Activated B cell treated with CpG ODN at 0.5 μM for 24 hours (primary cell): ENCODE measurements at regions of chr2 and their contacts with region 1.

Region 1: DNA sequence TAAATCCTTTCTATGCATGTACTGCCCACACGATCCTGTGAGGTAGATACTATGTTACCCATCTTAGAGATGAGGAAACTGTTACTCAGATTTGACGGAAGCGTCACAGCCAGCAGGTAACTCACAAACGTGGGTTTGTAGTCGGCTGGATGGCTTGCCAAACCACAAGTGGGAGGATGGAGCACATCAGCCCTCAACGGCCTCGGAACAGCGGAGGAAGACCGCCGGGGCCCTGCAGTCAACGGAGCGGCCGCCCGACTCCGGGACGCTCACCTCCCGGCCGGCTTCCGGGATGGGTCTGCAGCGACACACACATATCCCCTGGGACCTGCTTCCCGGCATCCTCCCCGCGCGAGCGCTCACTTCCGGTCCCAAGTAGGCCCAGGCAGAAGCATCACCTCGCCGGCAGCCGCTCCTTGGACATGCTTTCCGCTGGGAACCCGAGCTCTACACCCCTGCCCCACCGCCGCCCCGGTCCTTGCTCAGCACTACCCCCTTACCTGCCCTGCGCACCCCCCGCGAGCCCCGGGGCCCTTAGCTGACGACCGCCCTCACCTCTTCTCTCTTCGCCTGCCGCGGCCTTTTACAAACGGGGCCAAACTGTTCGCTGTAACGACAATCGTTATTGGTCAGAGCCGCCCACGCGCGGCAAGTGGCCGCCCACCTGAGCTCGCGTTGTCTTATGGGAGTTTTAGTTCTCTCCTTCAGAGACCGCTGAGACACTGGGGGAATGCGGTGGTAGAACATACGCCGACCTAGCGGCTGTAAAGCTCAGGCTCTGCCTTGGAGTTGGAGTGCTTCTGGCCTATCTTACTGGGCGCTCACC is at the start of gene C2orf42:
- DNase-seq: peak; percentile 93
- ATAC-seq: peak; percentile 86
- H3K4me3 Mint-ChIP-seq: peak within 1 kb of the TSS; percentile 98
- H3K27ac Mint-ChIP-seq: peak within 1 kb of the TSS; percentile 100
- H3K4me1 Mint-ChIP-seq: peaks cover 17% of the 10 kb centered on the region
- H3K27me3 Mint-ChIP-seq: no peaks in the 10 kb centered on the region
- CTCF ChIP-seq: no peak
- total RNA-seq, gene C2orf42: 28.4 and 34.8 TPM in 2 replicates

Region 2: GRCh38 chr2:69829256-69830046 is 361.2 kb before region 1 on chr2 and contains the start of gene GMCL1:
- CTCF ChIA-PET with region 1: no interaction called
- POLR2A ChIA-PET with region 1: interaction called, 6 read pairs
- intact Hi-C with region 1: loop called (anchors 1 kb)
- DNase-seq: peak; percentile 99
- ATAC-seq: peak; percentile 95
- H3K4me3 Mint-ChIP-seq: peak within 1 kb of the TSS; percentile 94
- H3K27ac Mint-ChIP-seq: peak within 1 kb of the TSS; percentile 96
- H3K4me1 Mint-ChIP-seq: peaks cover 29% of the 10 kb centered on the region
- H3K27me3 Mint-ChIP-seq: no peaks in the 10 kb centered on the region
- CTCF ChIP-seq: no peak
- total RNA-seq, gene GMCL1: 8.0 and 13.0 TPM in 2 replicates

Region 3: DNA sequence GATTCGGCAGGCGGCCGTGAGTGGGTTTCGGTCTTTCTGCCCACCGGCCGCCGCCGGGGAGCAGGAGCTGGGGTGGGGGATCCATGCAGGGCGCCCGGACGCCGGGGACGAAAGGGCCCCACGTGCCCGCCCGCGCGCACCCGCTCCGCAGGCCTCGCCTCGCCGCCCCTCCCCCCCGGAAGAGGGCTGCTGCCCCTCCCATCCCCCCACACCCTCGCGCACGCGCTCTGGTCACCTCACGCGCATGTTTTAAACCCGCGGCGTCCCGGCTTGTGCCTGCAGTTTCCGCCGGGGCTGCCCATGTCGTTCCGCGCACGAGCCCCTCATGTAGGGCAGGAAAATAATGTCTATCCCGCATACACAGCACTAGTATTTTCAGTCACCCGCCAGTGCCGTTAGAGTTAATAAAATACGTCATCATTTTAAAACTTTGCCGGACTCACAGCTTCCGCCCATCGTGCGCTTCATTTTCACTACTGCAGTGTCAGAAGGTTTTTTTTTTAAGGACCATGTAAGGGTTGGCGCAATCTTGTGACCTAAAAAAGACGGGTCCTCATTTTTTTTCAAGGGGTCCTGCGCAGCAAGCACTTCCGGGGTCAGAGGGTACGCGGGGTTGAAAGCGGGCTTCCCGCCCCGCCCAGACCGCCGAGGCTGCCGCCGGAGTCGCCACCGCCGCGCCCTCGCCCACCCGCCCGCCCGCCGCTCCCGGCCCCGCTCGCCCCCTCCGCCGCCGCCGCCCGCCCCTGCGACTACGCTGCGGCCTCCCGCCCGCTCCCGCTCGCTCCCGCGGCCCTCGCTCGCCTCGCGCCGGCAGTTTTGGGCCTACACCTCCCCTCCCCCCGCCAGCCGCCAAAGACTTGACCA is 103.6 kb before region 1 on chr2 and contains the start of gene PCBP1:
- CTCF ChIA-PET with region 1: no interaction called
- POLR2A ChIA-PET with region 1: interaction called, 82 read pairs
- intact Hi-C with region 1: loop called (anchors 1 kb)
- DNase-seq: peak; percentile 96
- ATAC-seq: peak; percentile 54
- H3K4me3 Mint-ChIP-seq: peak within 1 kb of the TSS; percentile 96
- H3K27ac Mint-ChIP-seq: peak within 1 kb of the TSS; percentile 100
- H3K4me1 Mint-ChIP-seq: peaks cover 70% of the 10 kb centered on the region
- H3K27me3 Mint-ChIP-seq: no peaks in the 10 kb centered on the region
- CTCF ChIP-seq: no peak
- total RNA-seq, gene PCBP1: 370 and 379 TPM in 2 replicates

Region 4: GRCh38 chr2:70124983-70125480 is 65.6 kb before region 1 on chr2:
- CTCF ChIA-PET with region 1: no interaction called
- POLR2A ChIA-PET with region 1: interaction called, 13 read pairs
- intact Hi-C with region 1: no loop called
- DNase-seq: peak; percentile 76
- ATAC-seq: peak; percentile 66
- H3K4me3 Mint-ChIP-seq: peak overlapping the region; percentile 93
- H3K27ac Mint-ChIP-seq: peak overlapping the region; percentile 100
- H3K4me1 Mint-ChIP-seq: peaks cover 81% of the 10 kb centered on the region
- H3K27me3 Mint-ChIP-seq: no peaks in the 10 kb centered on the region
- CTCF ChIP-seq: no peak

Region 5: GRCh38 chr2:70248181-70248847 is 57.7 kb after region 1 on chr2 and contains the start of gene TIA1:
- CTCF ChIA-PET with region 1: no interaction called
- POLR2A ChIA-PET with region 1: interaction called, 36 read pairs
- intact Hi-C with region 1: loop called (anchors 1 kb)
- DNase-seq: peak; percentile 93
- ATAC-seq: peak; percentile 96
- H3K4me3 Mint-ChIP-seq: peak within 1 kb of the TSS; percentile 99
- H3K27ac Mint-ChIP-seq: peak within 1 kb of the TSS; percentile 99
- H3K4me1 Mint-ChIP-seq: peaks cover 44% of the 10 kb centered on the region
- H3K27me3 Mint-ChIP-seq: peaks cover 4% of the 10 kb centered on the region
- CTCF ChIP-seq: no peak
- total RNA-seq, gene TIA1: 129 and 149 TPM in 2 replicates